ENCODE measurements at regions of chr1 and their contacts with region 1.

Region 1: DNA sequence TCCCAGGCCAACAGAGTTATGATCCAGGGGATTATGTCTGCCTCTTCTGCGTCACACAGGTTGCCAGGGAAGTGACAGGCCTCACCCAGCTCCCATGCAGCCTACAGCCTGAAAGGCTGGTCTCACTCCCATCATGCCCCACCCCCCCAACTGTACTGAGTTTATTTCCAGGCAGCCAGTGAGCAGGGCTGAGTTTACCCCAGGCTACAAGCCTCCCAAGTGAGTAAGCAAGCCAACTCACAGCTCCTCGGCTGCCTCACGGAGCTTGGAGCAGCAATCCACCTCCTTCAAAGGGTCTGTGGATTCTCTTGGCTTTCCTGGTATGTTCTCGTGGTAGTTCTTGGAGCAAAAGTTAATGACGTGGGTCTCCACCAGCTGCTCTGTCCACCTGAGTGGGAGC is 1147.6 kb upstream of the ADGRL4 start:
- DNase-seq: no peak

Region 2: DNA sequence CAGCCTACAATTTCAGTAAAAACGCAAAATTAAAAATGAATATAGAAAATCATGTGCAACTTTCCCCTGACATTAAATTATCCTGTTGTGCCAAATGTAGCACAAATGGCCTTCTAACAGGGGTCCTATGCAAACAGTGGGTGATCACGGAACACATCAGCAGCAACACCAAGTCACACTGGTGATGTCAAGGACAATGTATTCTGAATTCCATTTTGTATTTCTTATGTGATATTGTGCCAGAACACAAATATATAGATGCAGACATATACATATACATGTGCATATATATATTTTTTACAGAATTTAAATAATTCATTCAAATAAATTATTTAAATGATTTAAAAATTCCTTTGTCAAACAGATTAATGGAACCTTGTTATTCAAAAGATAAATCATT is 1638.0 kb after region 1 on chr1:
- intact Hi-C with region 1: loop called in 1 of 2 experiments (anchors 5 kb)
- DNase-seq: no peak

Measured in posterior vena cava (tissue), 2 donors.